ENCODE measurements at regions of chr1 and their contacts with region 1.

Region 1: DNA sequence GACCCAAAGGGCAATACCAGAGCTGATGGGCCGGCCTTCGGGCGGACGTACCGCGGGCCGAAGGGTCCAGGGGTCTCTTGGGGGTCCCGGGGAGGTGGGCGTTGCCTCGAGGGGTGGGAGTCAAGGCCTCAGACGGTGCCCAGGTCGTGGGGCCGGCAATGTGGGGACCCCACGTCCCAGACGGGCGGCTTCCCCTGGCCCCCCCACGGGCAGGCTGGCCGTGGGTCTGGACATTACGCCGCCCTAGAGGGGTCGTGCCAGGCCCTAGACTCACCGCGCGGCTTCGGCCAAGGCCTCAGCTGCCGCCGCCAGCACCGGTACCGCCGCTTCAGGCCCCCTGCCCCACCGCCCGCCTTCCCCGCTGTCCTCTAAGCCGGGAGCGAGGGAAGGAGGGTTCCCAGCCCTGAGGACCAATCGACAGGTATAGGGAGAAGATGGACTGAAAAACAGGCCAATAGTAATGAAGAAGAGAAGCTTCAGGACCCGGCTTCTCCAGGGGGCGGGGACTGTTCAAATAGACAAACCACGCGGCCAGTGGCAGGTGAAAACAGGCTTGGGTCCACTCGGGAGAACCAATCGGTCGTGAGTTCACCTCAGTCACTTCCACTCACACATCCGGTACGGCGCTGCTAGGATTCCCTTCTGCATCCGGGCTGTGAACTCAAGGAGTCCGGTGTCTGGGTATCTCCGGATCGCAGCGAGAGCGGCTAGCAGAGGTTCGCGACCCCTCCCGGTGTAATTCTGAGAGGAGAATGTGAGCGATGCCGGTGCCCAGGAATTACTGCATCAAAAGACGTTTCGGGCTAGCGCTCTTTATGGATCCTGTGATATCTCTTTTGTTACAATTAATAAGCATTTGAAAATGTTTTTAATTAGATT is at the start of gene MTOR:
- DNase-seq: peak; percentile 76 to 99 (median 98)
- ATAC-seq: peak; percentile 98
- H3K4me3 ChIP-seq: peak within 1 kb of the TSS; percentile 90
- H3K4me3 Mint-ChIP-seq: peak within 1 kb of the TSS; percentile 87 to 98 (median 93)
- H3K27ac ChIP-seq: peak within 1 kb of the TSS; percentile 83
- H3K27ac Mint-ChIP-seq: peak within 1 kb of the TSS; percentile 84 to 96 (median 90)
- H3K4me1 ChIP-seq: peaks cover 9 to 14% of the 10 kb centered on the region in 2 donors
- H3K4me1 Mint-ChIP-seq: peaks cover 6 to 31% (median 22%) of the 10 kb centered on the region in 7 donors
- H3K27me3 ChIP-seq: no peaks in the 10 kb centered on the region
- H3K27me3 Mint-ChIP-seq: peaks cover 0 to 5% (median 0%) of the 10 kb centered on the region in 5 donors
- total RNA-seq, gene MTOR: 38.8 to 47.9 (median 46.2) TPM

Region 2: GRCh38 chr1:11059990-11060830 is 202.2 kb before region 1 on chr1 and contains the start of gene SRM:
- CTCF ChIA-PET with region 1: no interaction called
- POLR2A ChIA-PET with region 1: interaction called, 3 read pairs
- intact Hi-C with region 1: loop called (anchors 1 to 2 kb)
- DNase-seq: peak; percentile 84 to 95 (median 91)
- ATAC-seq: peak; percentile 97
- H3K4me3 ChIP-seq: peak within 1 kb of the TSS; percentile 92
- H3K4me3 Mint-ChIP-seq: peak within 1 kb of the TSS; percentile 91 to 98 (median 93)
- H3K27ac ChIP-seq: peak within 1 kb of the TSS; percentile 85
- H3K27ac Mint-ChIP-seq: peak within 1 kb of the TSS; percentile 81 to 95 (median 91)
- H3K4me1 ChIP-seq: peaks cover 5 to 19% of the 10 kb centered on the region in 2 donors
- H3K4me1 Mint-ChIP-seq: peaks cover 6 to 37% (median 24%) of the 10 kb centered on the region in 7 donors
- H3K27me3 ChIP-seq: no peaks in the 10 kb centered on the region
- H3K27me3 Mint-ChIP-seq: no peaks in the 10 kb centered on the region
- total RNA-seq, gene SRM: 30.9 to 116 (median 44.1) TPM

Region 3: GRCh38 chr1:11272832-11273594 is 10.6 kb after region 1 on chr1 and contains the start of gene UBIAD1:
- CTCF ChIA-PET with region 1: interaction called, 5 read pairs
- POLR2A ChIA-PET with region 1: interaction called, 28 read pairs
- intact Hi-C with region 1: loop called (anchors 1 kb)
- DNase-seq: peak; percentile 66 to 84 (median 72)
- ATAC-seq: peak; percentile 93
- H3K4me3 ChIP-seq: peak within 1 kb of the TSS; percentile 71
- H3K4me3 Mint-ChIP-seq: peak within 1 kb of the TSS; percentile 84 to 99 (median 96)
- H3K27ac ChIP-seq: peak within 1 kb of the TSS; percentile 97
- H3K27ac Mint-ChIP-seq: peak within 1 kb of the TSS; percentile 90 to 96 (median 92)
- H3K4me1 ChIP-seq: peaks cover 21 to 30% of the 10 kb centered on the region in 2 donors
- H3K4me1 Mint-ChIP-seq: peaks cover 23 to 41% (median 32%) of the 10 kb centered on the region in 7 donors
- H3K27me3 ChIP-seq: no peaks in the 10 kb centered on the region
- H3K27me3 Mint-ChIP-seq: peaks cover 0 to 6% (median 0%) of the 10 kb centered on the region in 5 donors
- total RNA-seq, gene UBIAD1: 21.7 to 41.7 (median 32.9) TPM

Region 4: DNA sequence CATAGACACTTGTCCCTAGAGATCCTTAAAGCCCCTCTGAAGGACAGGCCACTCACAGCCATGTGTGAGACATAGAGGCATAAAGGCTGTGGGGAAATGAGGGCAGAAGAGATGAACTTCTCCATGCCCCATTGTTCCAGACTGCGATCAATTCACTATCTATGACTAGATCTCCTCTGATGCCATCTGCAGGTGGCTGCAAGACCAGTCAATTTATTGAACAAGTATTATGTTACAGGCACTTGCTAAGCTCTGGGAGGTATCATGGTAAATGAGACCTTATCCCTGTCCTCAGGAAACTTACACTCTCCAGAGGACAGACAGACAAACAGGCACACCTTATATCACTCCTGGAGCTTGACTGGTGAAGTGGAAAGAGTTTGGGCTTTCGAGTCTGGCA is 33.5 kb after region 1 on chr1:
- CTCF ChIA-PET with region 1: interaction called, 6 read pairs
- POLR2A ChIA-PET with region 1: interaction called, 7 read pairs
- intact Hi-C with region 1: loop called in 1 of 2 experiments (anchors 1 kb)
- DNase-seq: peak in 5 of 9 donors; percentile 31 to 55 (median 44)
- ATAC-seq: no peak
- H3K4me3 ChIP-seq: no peak overlapping the region
- H3K4me3 Mint-ChIP-seq: peak overlapping the region in 2 of 10 donors; percentile 18 to 59
- H3K27ac ChIP-seq: peak overlapping the region; percentile 41
- H3K27ac Mint-ChIP-seq: peak overlapping the region in 8 of 9 donors; percentile 55 to 93 (median 85)
- H3K4me1 ChIP-seq: peaks cover 0 to 34% of the 10 kb centered on the region in 2 donors
- H3K4me1 Mint-ChIP-seq: peaks cover 37 to 72% (median 59%) of the 10 kb centered on the region in 7 donors
- H3K27me3 ChIP-seq: no peaks in the 10 kb centered on the region
- H3K27me3 Mint-ChIP-seq: no peaks in the 10 kb centered on the region

Region 5: GRCh38 chr1:11328444-11328843 is 66.0 kb after region 1 on chr1:
- CTCF ChIA-PET with region 1: no interaction called
- POLR2A ChIA-PET with region 1: no interaction called
- intact Hi-C with region 1: no loop called
- DNase-seq: no peak
- ATAC-seq: no peak
- H3K4me3 ChIP-seq: no peak overlapping the region
- H3K4me3 Mint-ChIP-seq: no peak overlapping the region
- H3K27ac ChIP-seq: no peak overlapping the region
- H3K27ac Mint-ChIP-seq: no peak overlapping the region
- H3K4me1 ChIP-seq: no peaks in the 10 kb centered on the region
- H3K4me1 Mint-ChIP-seq: peaks cover 0 to 4% (median 0%) of the 10 kb centered on the region in 7 donors
- H3K27me3 ChIP-seq: no peaks in the 10 kb centered on the region
- H3K27me3 Mint-ChIP-seq: peaks cover 0 to 4% (median 0%) of the 10 kb centered on the region in 5 donors

Region 6: GRCh38 chr1:11352816-11353799 is 90.7 kb after region 1 on chr1:
- CTCF ChIA-PET with region 1: no interaction called
- POLR2A ChIA-PET with region 1: no interaction called
- intact Hi-C with region 1: no loop called
- DNase-seq: peak in 1 of 9 donors; percentile 16
- ATAC-seq: no peak
- H3K4me3 ChIP-seq: no peak overlapping the region
- H3K4me3 Mint-ChIP-seq: peak overlapping the region in 5 of 10 donors; percentile 3 to 54 (median 30)
- H3K27ac ChIP-seq: no peak overlapping the region
- H3K27ac Mint-ChIP-seq: peak overlapping the region in 5 of 9 donors; percentile 27 to 59 (median 37)
- H3K4me1 ChIP-seq: peaks cover 0 to 5% of the 10 kb centered on the region in 2 donors
- H3K4me1 Mint-ChIP-seq: peaks cover 0 to 39% (median 16%) of the 10 kb centered on the region in 7 donors
- H3K27me3 ChIP-seq: no peaks in the 10 kb centered on the region
- H3K27me3 Mint-ChIP-seq: peaks cover 6 to 31% (median 16%) of the 10 kb centered on the region in 5 donors

Region 7: GRCh38 chr1:11735854-11736745 is 473.7 kb after region 1 on chr1 and contains the start of gene AGTRAP:
- CTCF ChIA-PET with region 1: no interaction called
- POLR2A ChIA-PET with region 1: interaction called, 3 read pairs
- intact Hi-C with region 1: loop called in 1 of 2 experiments (anchors 5 kb)
- DNase-seq: peak; percentile 62 to 84 (median 71)
- ATAC-seq: peak; percentile 78
- H3K4me3 ChIP-seq: peak within 1 kb of the TSS; percentile 92
- H3K4me3 Mint-ChIP-seq: peak within 1 kb of the TSS; percentile 84 to 96 (median 92)
- H3K27ac ChIP-seq: peak within 1 kb of the TSS; percentile 79
- H3K27ac Mint-ChIP-seq: peak within 1 kb of the TSS; percentile 3 to 95 (median 83)
- H3K4me1 ChIP-seq: peaks cover 38 to 52% of the 10 kb centered on the region in 2 donors
- H3K4me1 Mint-ChIP-seq: peaks cover 51 to 80% (median 76%) of the 10 kb centered on the region in 7 donors
- H3K27me3 ChIP-seq: no peaks in the 10 kb centered on the region
- H3K27me3 Mint-ChIP-seq: no peaks in the 10 kb centered on the region
- total RNA-seq, gene AGTRAP: 28.2 to 82.5 (median 32.7) TPM